IMR-90 (cell line): ENCODE measurements at regions of chr7 and their contacts with region 1.

Region 1: DNA sequence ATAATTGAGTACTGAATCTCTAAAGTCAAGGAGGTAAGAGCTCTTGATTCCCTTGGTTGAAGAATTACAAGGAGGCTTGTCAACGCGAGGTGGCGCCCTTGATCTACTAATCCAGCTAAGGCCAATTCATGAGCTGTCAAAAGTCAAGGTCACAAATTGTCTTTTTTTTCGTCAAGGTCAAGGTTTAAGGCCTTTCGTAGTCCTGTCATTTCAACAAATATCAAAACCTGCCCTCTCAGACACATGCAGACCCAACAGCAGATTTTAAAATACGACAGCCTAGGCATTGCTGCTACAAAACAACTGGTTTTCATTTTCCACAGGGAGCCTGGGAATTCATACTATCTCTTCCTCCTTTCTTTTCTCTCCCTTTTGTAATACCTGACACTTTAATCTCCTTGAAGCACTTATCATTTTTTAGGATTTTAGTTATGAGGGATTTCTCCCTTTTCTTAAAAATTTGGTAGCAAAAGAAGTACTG is 3.6 kb downstream of the HOXA13 start:
- DNase-seq: peak; percentile 71
- ATAC-seq: peak; percentile 41; the same call in 1 of the 2 replicates
- H3K4me3 ChIP-seq: no peak overlapping the region
- H3K27ac ChIP-seq: no peak overlapping the region
- H3K4me1 ChIP-seq: no peaks in the 10 kb centered on the region
- H3K27me3 ChIP-seq: peaks cover 86% of the 10 kb centered on the region
- CTCF ChIP-seq: peak; percentile 84
- POLR2A ChIP-seq: 0 out of 2 replicates have a peak, but pooled peaks have one; percentile 37
- RAD21 ChIP-seq: peak; percentile 94

Region 2: DNA sequence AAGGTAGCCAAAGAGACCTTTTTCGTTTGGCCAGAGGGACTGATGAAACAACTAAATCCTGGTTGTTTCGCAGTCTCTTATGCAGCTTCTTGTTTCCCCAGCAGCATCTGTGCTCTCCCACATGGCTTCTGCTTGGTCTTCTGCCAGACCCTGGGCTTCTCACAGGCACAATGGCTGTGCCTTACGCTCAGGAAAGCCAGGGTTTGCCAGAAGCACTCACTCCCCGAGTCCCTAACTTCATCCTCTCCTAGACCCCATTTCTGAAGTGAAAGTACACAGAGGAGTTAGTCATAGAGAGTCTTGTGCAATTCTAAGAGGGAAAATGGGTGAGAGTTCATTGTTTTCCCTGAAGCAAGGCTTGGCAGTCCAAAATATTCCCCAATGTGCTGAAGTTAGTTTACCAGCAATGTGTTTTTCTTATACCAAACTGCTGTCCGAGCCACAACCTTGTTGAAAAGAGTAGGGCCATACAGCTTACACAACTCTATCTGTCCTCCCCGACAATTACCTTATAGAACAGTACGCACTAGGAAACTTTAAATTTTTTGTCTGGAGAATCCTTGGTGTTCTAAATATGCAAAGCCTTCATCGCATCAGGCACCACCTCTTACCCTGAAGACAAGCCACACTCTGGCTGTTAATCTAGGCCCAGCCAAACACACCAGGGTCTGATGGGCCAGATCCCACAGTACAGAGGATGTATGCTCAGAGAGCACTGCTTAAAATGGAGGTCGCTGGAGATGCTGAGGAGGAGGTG is 168.2 kb after region 1 on chr7:
- CTCF ChIA-PET with region 1: no interaction called
- POLR2A ChIA-PET with region 1: no interaction called
- dilution Hi-C with region 1: no loop called
- in situ Hi-C with region 1: no loop called
- intact Hi-C with region 1: no loop called
- DNase-seq: peak; percentile 69
- ATAC-seq: peak; percentile 83
- H3K4me3 ChIP-seq: peak overlapping the region; percentile 21; the same call in 1 of the 2 replicates
- H3K27ac ChIP-seq: peak overlapping the region; percentile 71; the same call in 1 of the 2 replicates
- H3K4me1 ChIP-seq: peaks cover 9% of the 10 kb centered on the region
- H3K27me3 ChIP-seq: peaks cover 2% of the 10 kb centered on the region
- CTCF ChIP-seq: no peak
- POLR2A ChIP-seq: no peak
- RAD21 ChIP-seq: no peak

Region 3: GRCh38 chr7:27662490-27663205 is 466.3 kb after region 1 on chr7 and contains the start of gene HIBADH:
- CTCF ChIA-PET with region 1: no interaction called
- POLR2A ChIA-PET with region 1: no interaction called
- dilution Hi-C with region 1: no loop called
- in situ Hi-C with region 1: no loop called
- intact Hi-C with region 1: loop called (anchors 5 kb)
- DNase-seq: peak; percentile 99
- ATAC-seq: peak; percentile 98
- H3K4me3 ChIP-seq: peak within 1 kb of the TSS; percentile 71
- H3K27ac ChIP-seq: peak within 1 kb of the TSS; percentile 78
- H3K4me1 ChIP-seq: no peaks in the 10 kb centered on the region
- H3K27me3 ChIP-seq: no peaks in the 10 kb centered on the region
- CTCF ChIP-seq: 0 out of 2 replicates have a peak, but pooled peaks have one; percentile 11
- POLR2A ChIP-seq: peak; percentile 62
- RAD21 ChIP-seq: peak; percentile 21; the same call in 1 of the 2 replicates
- total RNA-seq, gene HIBADH: 36.6 and 45.5 TPM in 2 replicates

Region 4: GRCh38 chr7:27921081-27921836 is 724.9 kb after region 1 on chr7:
- CTCF ChIA-PET with region 1: interaction called, 8 read pairs
- POLR2A ChIA-PET with region 1: no interaction called
- dilution Hi-C with region 1: no loop called
- in situ Hi-C with region 1: loop called (anchors 5 kb)
- intact Hi-C with region 1: loop called (anchors 1 kb)
- DNase-seq: peak; percentile 92
- ATAC-seq: peak; percentile 84
- H3K4me3 ChIP-seq: no peak overlapping the region
- H3K27ac ChIP-seq: no peak overlapping the region
- H3K4me1 ChIP-seq: peaks cover 19% of the 10 kb centered on the region
- H3K27me3 ChIP-seq: no peaks in the 10 kb centered on the region
- CTCF ChIP-seq: peak; percentile 74
- POLR2A ChIP-seq: no peak
- RAD21 ChIP-seq: peak; percentile 77

Region 5: DNA sequence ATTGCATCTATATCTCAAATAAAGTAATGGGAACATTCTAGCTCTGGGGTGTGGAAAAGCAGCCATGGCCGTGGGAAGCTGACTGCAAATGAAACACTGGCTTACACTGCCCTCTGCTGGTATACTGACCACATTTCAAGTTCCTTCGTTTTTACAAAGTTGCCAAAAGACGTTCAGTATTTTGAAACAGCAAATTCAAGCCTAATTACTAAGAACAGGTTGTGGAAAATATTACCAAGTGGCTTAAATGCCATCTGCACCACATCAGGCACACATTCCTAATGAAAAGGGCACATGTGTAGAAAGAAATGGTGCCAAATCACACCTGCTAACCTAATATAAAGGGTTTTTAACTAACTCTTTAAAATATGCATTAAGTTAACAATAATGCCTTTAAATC is 900.4 kb after region 1 on chr7:
- CTCF ChIA-PET with region 1: interaction called, 6 read pairs
- POLR2A ChIA-PET with region 1: no interaction called
- dilution Hi-C with region 1: no loop called
- in situ Hi-C with region 1: no loop called
- intact Hi-C with region 1: loop called (anchors 1 kb)
- DNase-seq: peak; percentile 72
- ATAC-seq: peak; percentile 77
- H3K4me3 ChIP-seq: no peak overlapping the region
- H3K27ac ChIP-seq: no peak overlapping the region
- H3K4me1 ChIP-seq: peaks cover 4% of the 10 kb centered on the region
- H3K27me3 ChIP-seq: no peaks in the 10 kb centered on the region
- CTCF ChIP-seq: peak; percentile 87
- POLR2A ChIP-seq: no peak
- RAD21 ChIP-seq: peak; percentile 83

Region 6: GRCh38 chr7:28926871-28927597 is 1730.7 kb after region 1 on chr7:
- CTCF ChIA-PET with region 1: no interaction called
- POLR2A ChIA-PET with region 1: no interaction called
- dilution Hi-C with region 1: no loop called
- in situ Hi-C with region 1: no loop called
- intact Hi-C with region 1: loop called (anchors 10 kb)
- DNase-seq: peak; percentile 86
- ATAC-seq: peak; percentile 91
- H3K4me3 ChIP-seq: peak overlapping the region; percentile 48
- H3K27ac ChIP-seq: no peak overlapping the region
- H3K4me1 ChIP-seq: no peaks in the 10 kb centered on the region
- H3K27me3 ChIP-seq: peaks cover 14% of the 10 kb centered on the region
- CTCF ChIP-seq: peak; percentile 86
- POLR2A ChIP-seq: no peak
- RAD21 ChIP-seq: peak; percentile 76